ENCODE measurements at regions of chr5 and their contacts with region 1.

Region 1: DNA sequence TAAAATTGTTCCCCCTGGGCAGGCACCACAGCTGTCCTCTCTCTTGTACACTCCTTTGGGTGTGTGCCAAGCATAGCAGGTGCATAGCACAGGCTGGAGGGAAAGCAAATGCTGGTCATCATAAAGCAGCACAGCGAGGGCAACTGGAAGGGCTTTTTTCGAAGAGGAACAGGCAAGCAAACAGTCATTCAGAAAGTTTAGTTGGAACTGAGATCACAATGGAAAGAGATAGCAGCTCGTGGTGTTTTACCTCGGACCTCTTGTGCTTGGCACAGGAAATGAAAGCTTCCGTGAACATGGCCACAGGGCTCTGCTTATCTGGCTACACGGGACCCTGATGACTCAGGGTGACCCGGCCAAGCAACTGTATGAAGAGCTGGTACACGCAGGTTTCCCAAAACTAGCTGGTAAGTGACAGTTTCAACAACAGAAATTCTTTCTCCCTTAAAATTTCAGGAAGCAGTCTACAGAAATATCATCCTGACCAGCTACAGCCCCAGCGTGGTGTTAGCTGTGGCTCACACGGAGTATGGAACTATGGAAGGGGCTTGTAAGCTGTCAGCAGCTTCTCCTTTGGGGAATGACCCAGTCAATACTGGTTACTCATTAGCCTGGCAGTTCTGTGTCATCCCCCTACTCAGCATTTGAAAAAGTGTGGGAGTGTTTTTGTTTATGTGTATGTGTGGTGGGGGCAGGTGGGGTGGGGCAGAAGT is 48.1 kb downstream of the POC5 start:
- DNase-seq: peak; percentile 27 to 85 (median 51)
- ATAC-seq: peak; percentile 90
- H3K4me3 ChIP-seq: peak overlapping the region; percentile 25
- H3K27ac ChIP-seq: peak overlapping the region; percentile 87
- H3K4me1 ChIP-seq: peaks cover 5 to 18% of the 10 kb centered on the region in 2 experiments; a peak in 3 of 5 replicates
- H3K27me3 ChIP-seq: no peaks in the 10 kb centered on the region
- CTCF ChIP-seq: no peak
- EP300 ChIP-seq: peak; percentile 65; the same call in 1 of the 2 replicates
- POLR2A ChIP-seq: peak; percentile 42; the same call in 1 of the 2 replicates
- RAD21 ChIP-seq: peak in 1 of 2 experiments; percentile 10; a peak in 1 of 4 replicates

Region 2: DNA sequence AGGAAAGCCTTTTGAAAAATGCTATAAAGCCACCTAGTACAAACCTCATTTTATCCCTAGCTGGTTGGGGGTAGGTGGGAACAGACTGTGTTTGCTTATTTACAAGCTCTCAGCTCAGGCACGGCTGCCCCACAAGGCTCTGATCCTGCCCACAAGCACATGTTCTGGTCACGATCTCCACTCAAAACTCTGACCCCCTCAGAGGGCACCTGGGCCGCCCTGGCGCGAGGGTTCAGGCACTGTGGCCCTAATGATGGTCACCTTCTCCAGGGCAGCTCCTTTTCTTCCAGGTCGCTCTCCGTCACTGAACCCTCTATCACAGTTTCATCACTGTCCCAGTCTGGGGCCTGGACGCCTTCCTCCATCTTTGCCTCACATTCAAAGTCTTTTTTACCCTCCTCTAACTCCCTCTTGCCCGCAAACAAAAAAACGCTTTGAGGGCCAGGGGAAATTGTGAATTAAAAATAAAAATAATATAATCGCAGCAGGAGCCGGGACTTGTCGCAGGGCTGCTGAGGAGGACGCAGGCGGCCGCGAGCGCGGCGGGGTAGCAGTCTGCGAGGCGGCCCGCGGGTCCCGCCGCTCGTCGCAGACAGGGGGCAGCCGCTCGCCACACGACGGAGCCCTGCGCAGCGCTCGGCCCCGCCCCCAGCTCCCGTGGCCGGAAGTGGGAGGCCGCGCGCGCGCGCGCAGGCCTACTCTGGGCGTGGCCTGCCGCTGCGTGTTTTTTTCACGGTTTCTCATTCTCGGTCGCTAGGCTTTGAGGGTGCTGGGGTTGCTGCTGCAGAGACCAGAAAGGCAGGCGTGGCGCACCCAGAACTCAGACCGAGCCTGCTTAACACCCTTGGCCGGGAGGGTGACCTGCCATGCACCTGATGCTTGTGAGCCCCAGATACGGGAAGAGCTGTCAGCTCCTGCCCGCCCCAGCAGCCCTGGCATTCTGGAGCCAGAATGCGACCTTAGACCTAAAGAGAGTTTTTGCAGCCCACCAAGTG is 432.5 kb before region 1 on chr5 and contains the start of gene ANKRD31:
- CTCF ChIA-PET with region 1: no interaction called
- POLR2A ChIA-PET with region 1: no interaction called
- in situ Hi-C with region 1: no loop called
- intact Hi-C with region 1: loop called (anchors 10 kb)
- DNase-seq: peak; percentile 91 to 96 (median 94)
- ATAC-seq: peak; percentile 99
- H3K4me3 ChIP-seq: peak within 1 kb of the TSS; percentile 84
- H3K27ac ChIP-seq: peak within 1 kb of the TSS; percentile 62
- H3K4me1 ChIP-seq: peaks cover 6 to 12% of the 10 kb centered on the region in 2 experiments; a peak in 4 of 5 replicates
- H3K27me3 ChIP-seq: no peaks in the 10 kb centered on the region; a peak in 1 of 5 replicates
- CTCF ChIP-seq: peak; percentile 66 to 87 (median 82)
- EP300 ChIP-seq: peak; percentile 23
- POLR2A ChIP-seq: peak; percentile 72
- RAD21 ChIP-seq: peak; percentile 79 to 85
- polyA plus RNA-seq, gene ANKRD31: 0.03 to 0.04 TPM

Region 3: DNA sequence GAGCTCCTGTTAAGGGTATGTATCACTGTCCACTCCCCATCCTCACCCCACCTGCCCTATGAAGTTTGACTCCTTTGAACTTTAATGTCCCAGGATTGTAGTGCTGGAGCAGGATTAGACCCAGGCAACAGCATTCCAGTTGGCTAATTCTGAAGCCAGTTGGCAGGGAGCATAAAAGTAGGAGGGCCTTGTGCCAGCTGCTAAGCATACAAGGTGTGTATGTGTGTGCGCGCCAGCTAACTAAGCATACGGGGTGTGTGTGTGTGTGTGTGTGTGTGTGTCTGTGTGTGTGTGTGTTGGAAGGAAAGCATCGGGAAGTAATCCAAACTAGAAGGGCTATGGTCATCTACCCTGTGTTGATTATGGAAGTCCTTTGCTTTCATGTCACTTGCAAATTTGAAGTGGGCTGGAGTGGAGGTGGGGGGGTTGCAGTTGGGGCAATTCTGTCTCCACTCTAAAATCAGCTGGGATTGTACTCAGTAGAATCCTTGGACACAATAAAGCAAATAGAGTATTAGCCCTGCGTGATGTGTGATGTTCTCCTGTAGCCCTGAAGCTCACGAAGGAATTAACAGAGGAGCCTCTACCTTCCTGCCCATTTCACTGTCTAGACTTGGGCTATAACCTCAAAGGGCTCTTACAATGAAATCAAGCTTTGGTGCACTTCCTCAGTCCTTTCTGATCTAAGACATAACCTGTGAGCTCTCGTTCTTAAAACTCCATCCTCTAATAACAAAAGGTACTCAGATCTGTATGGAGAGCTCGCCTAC is 305.2 kb before region 1 on chr5:
- CTCF ChIA-PET with region 1: no interaction called
- POLR2A ChIA-PET with region 1: no interaction called
- in situ Hi-C with region 1: no loop called
- intact Hi-C with region 1: loop called (anchors 10 kb)
- DNase-seq: peak in 1 of 4 experiments; percentile 4
- ATAC-seq: peak; percentile 10; the same call in 1 of the 3 replicates
- H3K4me3 ChIP-seq: no peak overlapping the region
- H3K27ac ChIP-seq: no peak overlapping the region
- H3K4me1 ChIP-seq: peaks cover 0 to 3% of the 10 kb centered on the region in 2 experiments; a peak in 1 of 5 replicates
- H3K27me3 ChIP-seq: no peaks in the 10 kb centered on the region
- CTCF ChIP-seq: no peak
- EP300 ChIP-seq: no peak
- POLR2A ChIP-seq: peak; percentile 68
- RAD21 ChIP-seq: no peak

Region 4: DNA sequence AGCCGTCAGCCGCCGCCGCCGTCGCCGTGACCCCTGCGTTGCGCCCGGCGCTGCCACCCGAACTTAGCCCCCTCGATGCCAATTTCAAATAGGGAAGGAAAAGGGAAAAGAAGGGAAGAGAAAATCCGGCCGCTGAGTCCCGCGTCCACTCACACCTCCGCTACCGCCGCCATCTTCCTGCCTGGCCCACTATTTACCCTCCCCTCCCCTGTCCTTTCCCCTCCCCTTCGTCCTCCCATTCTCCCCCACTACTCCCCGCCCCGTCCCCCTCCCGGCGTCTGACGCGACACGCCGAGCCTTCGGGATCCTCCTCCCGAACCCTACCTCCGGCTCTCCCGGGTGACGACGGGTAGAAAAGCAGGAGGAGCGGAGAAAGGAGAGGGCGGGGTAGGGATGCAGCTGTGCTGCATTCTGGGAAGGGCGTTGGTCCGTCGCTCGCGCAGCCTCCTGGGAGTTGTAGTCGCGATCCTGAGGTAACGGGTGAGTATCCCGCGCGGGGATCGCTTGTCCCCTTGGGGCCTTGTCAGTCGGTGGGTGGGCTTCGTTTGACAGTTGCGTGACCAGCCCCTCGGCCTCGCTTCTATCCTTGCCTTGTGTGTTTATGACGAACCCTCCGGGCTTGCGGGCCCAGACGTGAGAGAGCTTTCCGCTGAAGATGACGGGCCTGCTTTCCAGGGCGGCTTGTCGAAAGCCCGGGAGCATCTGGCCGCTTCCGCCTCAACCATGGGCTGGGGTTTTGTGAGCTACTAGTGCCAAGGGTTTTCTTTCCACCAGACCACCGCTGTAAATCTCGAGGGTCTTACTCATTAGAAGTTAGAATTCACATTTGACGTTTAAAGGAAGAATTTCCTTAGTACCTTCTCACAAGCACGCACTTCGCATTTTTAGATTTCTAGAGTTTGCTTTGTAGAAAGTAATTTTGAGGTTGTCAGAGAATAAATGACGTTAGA is 157.4 kb before region 1 on chr5 and contains the starts of genes CERT1 and POLK:
- CTCF ChIA-PET with region 1: no interaction called
- POLR2A ChIA-PET with region 1: no interaction called
- in situ Hi-C with region 1: no loop called
- intact Hi-C with region 1: loop called (anchors 5 kb)
- DNase-seq: peak; percentile 93 to 99 (median 96)
- ATAC-seq: peak; percentile 95
- H3K4me3 ChIP-seq: peak within 1 kb of the TSS; percentile 89
- H3K27ac ChIP-seq: peak within 1 kb of the TSS; percentile 88
- H3K4me1 ChIP-seq: peaks cover 2 to 8% of the 10 kb centered on the region in 2 experiments; a peak in 2 of 5 replicates
- H3K27me3 ChIP-seq: no peaks in the 10 kb centered on the region
- CTCF ChIP-seq: no peak
- EP300 ChIP-seq: no peak
- POLR2A ChIP-seq: peak; percentile 88
- RAD21 ChIP-seq: no peak; a peak in 1 of 4 replicates
- polyA plus RNA-seq, gene CERT1: 3.4 to 5.1 TPM
- polyA plus RNA-seq, gene POLK: 6.1 to 11.4 TPM

Region 5: GRCh38 chr5:75616971-75617621 is 52.0 kb before region 1 on chr5:
- CTCF ChIA-PET with region 1: no interaction called
- POLR2A ChIA-PET with region 1: interaction called, 3 read pairs
- in situ Hi-C with region 1: no loop called
- intact Hi-C with region 1: loop called (anchors 5 kb)
- DNase-seq: peak in 3 of 4 experiments; percentile 15 to 65 (median 62)
- ATAC-seq: peak; percentile 64
- H3K4me3 ChIP-seq: no peak overlapping the region
- H3K27ac ChIP-seq: peak overlapping the region; percentile 44; the same call in 1 of the 3 replicates
- H3K4me1 ChIP-seq: peaks cover 13 to 47% of the 10 kb centered on the region in 2 experiments
- H3K27me3 ChIP-seq: no peaks in the 10 kb centered on the region
- CTCF ChIP-seq: no peak
- EP300 ChIP-seq: no peak
- POLR2A ChIP-seq: no peak
- RAD21 ChIP-seq: no peak

Measured in K562 (cell line).